ENCODE measurements at regions of chr10 and their contacts with region 1.

Region 1: DNA sequence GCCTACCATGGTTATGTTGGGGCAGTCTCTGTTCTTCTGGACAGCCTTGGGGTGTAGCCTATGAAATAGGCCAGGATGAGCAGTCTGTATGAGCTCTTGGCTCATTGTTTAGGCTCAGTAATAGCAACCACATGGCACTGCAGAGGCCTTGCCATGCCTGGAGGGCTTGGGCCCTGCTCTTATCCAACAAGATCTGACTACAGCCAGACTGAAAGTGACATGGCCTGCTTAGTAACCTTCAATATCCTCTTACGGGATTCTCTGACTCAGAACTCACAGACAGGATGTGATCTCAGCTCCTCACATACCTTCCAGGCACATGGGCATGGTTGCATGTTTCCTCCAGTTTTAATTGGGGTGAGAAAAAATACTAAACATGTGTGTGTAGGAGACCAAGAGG is 289.3 kb downstream of the PTEN start:
- DNase-seq: peak in 1 of 5 donors; percentile 29
- ATAC-seq: peak; percentile 44 to 94 (median 78)
- H3K4me3 ChIP-seq: no peak overlapping the region
- H3K27ac ChIP-seq: peak overlapping the region in 3 of 12 donors; percentile 13 to 66 (median 55)
- H3K4me1 ChIP-seq: peaks cover 0 to 22% (median 1%) of the 10 kb centered on the region in 12 donors
- H3K27me3 ChIP-seq: no peaks in the 10 kb centered on the region
- CTCF ChIP-seq: no peak
- POLR2A ChIP-seq: no peak

Region 2: GRCh38 chr10:88209837-88210561 is 57.3 kb after region 1 on chr10:
- intact Hi-C with region 1: loop called in 1 of 10 experiments (anchors 10 kb)
- DNase-seq: no peak
- ATAC-seq: no peak
- H3K4me3 ChIP-seq: no peak overlapping the region
- H3K27ac ChIP-seq: no peak overlapping the region
- H3K4me1 ChIP-seq: no peaks in the 10 kb centered on the region
- H3K27me3 ChIP-seq: no peaks in the 10 kb centered on the region
- CTCF ChIP-seq: no peak
- POLR2A ChIP-seq: no peak

Region 3: GRCh38 chr10:88222881-88223280 is 70.2 kb after region 1 on chr10:
- intact Hi-C with region 1: loop called in 3 of 10 experiments (anchors 5 to 10 kb)
- DNase-seq: no peak
- ATAC-seq: no peak
- H3K4me3 ChIP-seq: no peak overlapping the region
- H3K27ac ChIP-seq: no peak overlapping the region
- H3K4me1 ChIP-seq: peaks cover 0 to 39% (median 18%) of the 10 kb centered on the region in 12 donors
- H3K27me3 ChIP-seq: no peaks in the 10 kb centered on the region
- CTCF ChIP-seq: no peak
- POLR2A ChIP-seq: no peak

Region 4: DNA sequence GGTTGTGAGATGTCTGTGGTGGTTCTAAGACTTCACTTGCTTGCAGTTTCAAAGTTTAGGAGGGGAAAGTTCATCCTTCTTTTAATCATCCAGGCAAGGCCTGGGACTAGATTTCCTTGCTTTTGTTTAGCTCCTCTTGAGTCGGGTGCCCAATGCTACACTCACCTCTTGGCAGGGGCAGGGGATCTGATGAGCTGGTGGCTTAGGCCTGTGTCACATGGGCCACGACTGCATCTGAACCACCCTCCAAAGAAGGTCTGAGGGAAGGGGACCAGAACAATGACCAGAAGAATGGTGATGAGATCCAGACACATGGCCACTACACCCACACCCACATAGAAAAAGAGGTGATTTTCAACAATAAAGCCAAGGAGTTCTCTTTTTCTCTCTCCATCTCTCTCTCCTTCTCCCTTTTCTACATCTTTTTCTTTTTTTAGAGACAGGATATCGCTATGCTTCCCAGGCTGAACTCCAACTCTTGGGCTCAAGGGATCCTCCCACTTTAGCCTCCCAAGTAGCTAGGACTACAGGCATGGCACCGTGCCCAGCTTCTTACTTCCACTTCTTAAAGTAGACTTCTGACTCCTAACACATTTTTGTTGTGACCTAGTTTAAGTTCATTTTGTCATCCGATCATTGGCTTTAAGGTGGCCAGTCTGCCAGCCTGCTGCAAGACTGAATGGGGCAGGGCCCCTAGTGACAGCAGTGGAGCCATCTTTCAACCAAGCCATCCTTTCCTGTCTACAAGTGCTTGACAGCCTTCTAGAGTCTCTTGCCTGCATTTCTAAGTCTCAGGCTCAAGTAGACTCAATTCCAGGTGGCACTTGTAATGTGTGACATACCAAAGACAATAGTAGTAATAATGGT is 79.5 kb after region 1 on chr10:
- intact Hi-C with region 1: loop called in 1 of 10 experiments (anchors 5 kb)
- DNase-seq: peak; percentile 83 to 93 (median 85)
- ATAC-seq: peak; percentile 11 to 63 (median 46)
- H3K4me3 ChIP-seq: no peak overlapping the region
- H3K27ac ChIP-seq: peak overlapping the region; percentile 24 to 75 (median 63)
- H3K4me1 ChIP-seq: peaks cover 0 to 65% (median 47%) of the 10 kb centered on the region in 12 donors
- H3K27me3 ChIP-seq: no peaks in the 10 kb centered on the region
- CTCF ChIP-seq: no peak
- POLR2A ChIP-seq: no peak

Region 5: DNA sequence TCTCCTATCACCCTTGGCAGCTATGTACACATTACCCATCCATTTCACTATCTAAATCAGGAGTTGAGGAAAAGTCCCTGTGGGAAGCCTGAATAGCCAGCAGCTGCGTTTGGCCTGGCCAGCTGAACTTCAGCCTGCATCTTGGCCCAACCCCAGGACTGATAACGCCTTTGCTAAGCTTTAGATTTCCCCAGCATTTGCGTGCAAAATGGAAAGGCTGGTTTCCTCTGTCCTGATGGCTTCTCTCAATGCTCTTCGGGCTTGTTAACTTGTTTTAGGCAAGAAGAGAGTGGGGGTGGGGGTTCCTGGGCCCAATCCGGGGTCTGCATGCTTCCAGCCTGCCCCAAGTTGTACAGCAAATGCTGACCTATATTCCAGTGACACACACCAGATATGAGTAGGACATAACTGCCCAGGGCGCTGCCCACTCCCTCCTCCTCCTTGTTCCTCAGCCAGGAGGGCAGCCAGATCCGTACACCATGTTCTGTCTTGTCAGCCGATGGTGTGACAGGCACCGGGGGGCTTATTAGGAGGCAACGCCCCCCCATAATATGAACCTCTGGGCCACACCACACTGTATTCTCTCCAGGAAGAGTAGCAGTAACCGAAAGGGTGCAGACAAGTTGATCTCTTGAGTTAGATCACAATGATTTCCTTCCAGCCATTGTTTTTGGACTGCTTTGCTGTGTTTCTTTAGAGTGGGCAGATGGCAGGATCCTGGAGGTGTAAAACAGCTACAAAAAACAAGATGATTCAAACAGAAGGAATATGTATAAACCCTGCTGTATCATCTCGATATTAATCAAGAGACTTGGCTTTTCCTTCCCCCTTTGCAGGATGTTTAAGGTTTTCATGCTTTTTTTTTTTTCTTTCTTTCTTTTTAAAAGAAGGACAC is 91.4 kb after region 1 on chr10:
- intact Hi-C with region 1: loop called in 1 of 10 experiments (anchors 5 kb)
- DNase-seq: peak; percentile 84 to 90 (median 88)
- ATAC-seq: peak; percentile 89 to 97 (median 92)
- H3K4me3 ChIP-seq: peak overlapping the region in 9 of 12 donors; percentile 9 to 39 (median 28)
- H3K27ac ChIP-seq: peak overlapping the region; percentile 76 to 90 (median 84)
- H3K4me1 ChIP-seq: peaks cover 6 to 57% (median 40%) of the 10 kb centered on the region in 12 donors
- H3K27me3 ChIP-seq: no peaks in the 10 kb centered on the region
- CTCF ChIP-seq: no peak
- POLR2A ChIP-seq: no peak

Region 6: DNA sequence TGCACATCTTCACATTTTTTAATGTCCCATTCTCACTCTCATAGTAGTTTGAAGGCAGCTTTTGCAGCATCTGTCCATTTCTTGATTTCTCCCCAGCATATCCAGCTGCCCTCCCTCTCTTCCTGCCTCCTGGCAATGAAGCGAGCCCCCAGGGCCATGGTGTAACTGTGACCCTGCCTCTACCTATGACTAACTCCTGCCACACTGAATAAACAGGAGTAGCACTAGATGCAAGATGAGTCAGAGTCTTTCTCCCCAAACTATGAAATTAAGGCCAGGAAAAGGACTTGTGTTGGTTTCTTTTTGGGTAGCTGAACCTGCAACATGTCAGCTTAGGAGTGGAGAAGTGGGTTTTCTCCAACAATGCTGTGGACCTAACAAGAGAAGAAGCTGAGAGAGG is 101.4 kb after region 1 on chr10:
- intact Hi-C with region 1: loop called in 1 of 10 experiments (anchors 5 kb)
- DNase-seq: peak in 1 of 5 donors; percentile 41
- ATAC-seq: peak in 2 of 4 donors; percentile 63 to 67
- H3K4me3 ChIP-seq: no peak overlapping the region
- H3K27ac ChIP-seq: peak overlapping the region in 3 of 12 donors; percentile 23 to 84 (median 73)
- H3K4me1 ChIP-seq: peaks cover 0 to 44% (median 4%) of the 10 kb centered on the region in 12 donors
- H3K27me3 ChIP-seq: no peaks in the 10 kb centered on the region
- CTCF ChIP-seq: no peak
- POLR2A ChIP-seq: no peak

Region 7: DNA sequence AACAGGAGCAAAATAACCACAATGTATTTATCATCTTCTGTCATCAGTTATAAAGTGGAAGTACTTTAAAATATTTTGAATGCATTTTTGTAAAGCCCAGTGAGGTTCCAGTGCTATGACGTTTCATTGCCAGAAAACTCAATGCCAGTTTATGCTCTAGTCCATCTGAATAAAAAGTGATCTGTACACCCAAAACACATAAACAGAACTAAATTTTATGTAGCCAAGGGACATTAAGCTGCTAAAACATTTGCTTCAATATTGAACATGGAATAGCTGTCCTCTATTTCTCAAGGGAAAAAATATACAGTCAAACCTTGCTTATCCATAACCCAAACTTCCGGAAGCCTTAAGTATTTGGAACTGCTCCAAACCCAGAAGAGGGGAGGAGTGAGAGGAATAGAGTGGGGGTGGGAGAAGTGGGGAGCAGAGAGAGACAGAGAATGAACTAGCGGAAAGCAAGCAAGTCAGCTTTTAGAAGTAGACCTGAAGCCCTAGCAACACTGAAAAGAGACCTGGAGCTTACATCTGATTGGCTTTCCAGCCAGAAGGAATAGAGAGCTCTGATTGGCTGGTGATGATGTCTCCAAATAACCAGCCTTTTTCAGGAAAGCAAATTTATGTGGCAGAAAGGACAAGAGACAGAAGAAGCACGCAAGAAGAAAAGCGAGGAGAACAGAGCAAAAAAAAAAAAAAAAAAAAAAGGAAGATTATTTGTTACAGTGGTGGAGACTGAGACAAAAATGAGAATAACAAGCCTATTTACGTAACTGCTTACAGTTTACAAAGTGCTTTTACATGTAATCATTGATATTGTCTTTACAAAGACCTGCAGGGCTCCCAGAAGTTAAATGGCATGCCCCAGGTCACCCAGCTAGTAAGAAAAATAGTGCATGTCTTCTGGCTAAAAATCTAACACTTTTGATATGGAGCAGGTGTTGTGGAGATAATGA is 234.4 kb after region 1 on chr10:
- intact Hi-C with region 1: loop called in 1 of 10 experiments (anchors 10 kb)
- DNase-seq: peak in 2 of 5 donors; percentile 24 to 51
- ATAC-seq: peak; percentile 72 to 95 (median 92)
- H3K4me3 ChIP-seq: peak overlapping the region in 9 of 12 donors; percentile 5 to 48 (median 32)
- H3K27ac ChIP-seq: peak overlapping the region in 11 of 12 donors; percentile 43 to 73 (median 55)
- H3K4me1 ChIP-seq: peaks cover 0 to 52% (median 19%) of the 10 kb centered on the region in 12 donors
- H3K27me3 ChIP-seq: no peaks in the 10 kb centered on the region
- CTCF ChIP-seq: no peak
- POLR2A ChIP-seq: peak in 1 of 2 donors; percentile 35